AG04450 (cell line): ENCODE measurements at regions of chr16 and their contacts with region 1.

Region 1: DNA sequence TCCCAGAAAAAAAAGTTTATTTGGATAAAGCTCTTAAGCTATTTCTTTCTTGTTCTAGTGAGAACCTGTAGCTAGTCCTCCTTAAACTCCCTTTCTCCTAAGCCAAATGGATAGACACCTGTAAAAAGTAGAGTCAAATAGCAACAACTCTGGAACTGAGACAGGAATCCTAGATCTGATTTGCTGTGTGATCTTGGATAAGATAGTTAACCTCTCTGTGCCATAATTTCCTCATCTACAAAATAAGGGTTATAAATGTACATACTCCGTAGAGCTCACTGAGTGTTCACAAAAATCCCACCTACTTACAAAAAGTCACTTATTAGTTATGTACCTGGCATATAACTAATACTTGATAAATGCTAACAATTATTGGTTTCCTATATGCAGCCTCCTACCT is 270.3 kb downstream of the ABCC12 start:
- DNase-seq: no peak
- H3K4me3 ChIP-seq: no peak overlapping the region
- H3K27ac ChIP-seq: no peak overlapping the region
- H3K27me3 ChIP-seq: peaks cover 5% of the 10 kb centered on the region
- CTCF ChIP-seq: no peak

Region 2: DNA sequence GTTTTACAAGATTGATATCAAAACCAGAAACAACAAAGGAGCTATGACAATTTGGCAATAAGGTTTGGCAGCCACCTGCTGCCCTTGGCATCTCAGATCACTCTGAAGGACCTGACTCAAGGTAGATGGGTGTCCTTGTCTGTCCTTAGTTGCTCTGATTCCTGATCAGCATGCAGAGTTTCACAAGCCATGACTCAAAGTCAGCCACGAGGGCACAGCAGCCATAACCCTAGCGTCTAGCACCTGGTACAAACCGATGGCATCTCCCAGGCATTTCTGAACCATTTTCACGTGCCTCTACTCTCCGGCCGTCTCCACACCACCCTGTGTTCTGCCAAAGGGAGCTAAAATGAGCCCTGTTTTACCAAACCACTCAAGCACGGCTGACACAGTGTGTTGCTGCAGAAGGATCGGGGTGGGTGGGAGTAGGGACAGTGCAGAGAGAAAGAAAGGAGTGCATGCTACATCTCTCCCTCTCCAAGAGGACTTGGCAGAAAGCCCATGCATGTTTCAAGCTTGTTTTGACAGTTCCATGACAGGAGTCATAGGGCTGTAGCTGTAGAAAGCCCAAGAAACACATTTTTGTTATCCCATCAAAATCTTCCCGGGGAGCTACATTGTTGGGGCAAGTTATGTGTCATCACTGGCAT is 27.0 kb before region 1 on chr16:
- CTCF ChIA-PET with region 1: no interaction called
- POLR2A ChIA-PET with region 1: no interaction called
- DNase-seq: no peak
- H3K4me3 ChIP-seq: no peak overlapping the region
- H3K27ac ChIP-seq: no peak overlapping the region
- H3K27me3 ChIP-seq: peaks cover 12% of the 10 kb centered on the region
- CTCF ChIP-seq: no peak

Region 3: GRCh38 chr16:47873434-47873833 is 12.1 kb before region 1 on chr16:
- CTCF ChIA-PET with region 1: no interaction called
- POLR2A ChIA-PET with region 1: no interaction called
- DNase-seq: no peak
- H3K4me3 ChIP-seq: no peak overlapping the region
- H3K27ac ChIP-seq: no peak overlapping the region
- H3K27me3 ChIP-seq: no peaks in the 10 kb centered on the region
- CTCF ChIP-seq: peak; percentile 20; the same call in 1 of the 2 replicates

Region 4: DNA sequence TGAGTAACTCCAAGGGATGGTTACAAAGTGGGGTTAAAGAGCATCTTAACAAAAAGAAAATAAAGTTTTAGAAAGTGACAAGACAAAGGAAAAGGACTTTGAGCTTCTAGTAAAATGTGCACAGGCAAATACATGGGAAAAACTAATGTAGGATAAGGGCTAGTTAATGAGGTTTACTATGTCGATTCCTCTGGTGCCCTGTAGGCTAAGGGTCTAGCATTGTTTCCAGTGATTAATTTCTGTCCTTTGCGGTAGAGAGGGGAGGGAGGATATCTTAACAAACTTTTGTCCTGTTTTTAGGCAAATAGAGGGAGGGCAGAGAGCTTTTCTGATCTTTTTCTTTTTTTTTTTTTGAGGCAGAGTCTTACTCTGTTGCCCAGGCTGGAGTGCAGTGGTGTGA is 596.3 kb after region 1 on chr16:
- CTCF ChIA-PET with region 1: interaction called, 13 read pairs
- POLR2A ChIA-PET with region 1: no interaction called
- DNase-seq: no peak
- H3K4me3 ChIP-seq: no peak overlapping the region
- H3K27ac ChIP-seq: no peak overlapping the region
- H3K27me3 ChIP-seq: peaks cover 2% of the 10 kb centered on the region
- CTCF ChIP-seq: no peak